ENCODE measurements at regions of chr1 and their contacts with region 1.

Region 1: GRCh38 chr1:92655197-92655801 is 129.6 kb downstream of the EVI5 start:
- DNase-seq: no peak
- H3K4me3 ChIP-seq: no peak overlapping the region
- CTCF ChIP-seq: no peak

Region 2: GRCh38 chr1:92709738-92710137 is 54.4 kb after region 1 on chr1:
- in situ Hi-C with region 1: no loop called
- DNase-seq: peak; percentile 41
- H3K4me3 ChIP-seq: no peak overlapping the region
- CTCF ChIP-seq: no peak

Region 3: GRCh38 chr1:92728697-92729096 is 73.4 kb after region 1 on chr1:
- in situ Hi-C with region 1: no loop called
- DNase-seq: no peak
- H3K4me3 ChIP-seq: no peak overlapping the region
- CTCF ChIP-seq: no peak

Region 4: DNA sequence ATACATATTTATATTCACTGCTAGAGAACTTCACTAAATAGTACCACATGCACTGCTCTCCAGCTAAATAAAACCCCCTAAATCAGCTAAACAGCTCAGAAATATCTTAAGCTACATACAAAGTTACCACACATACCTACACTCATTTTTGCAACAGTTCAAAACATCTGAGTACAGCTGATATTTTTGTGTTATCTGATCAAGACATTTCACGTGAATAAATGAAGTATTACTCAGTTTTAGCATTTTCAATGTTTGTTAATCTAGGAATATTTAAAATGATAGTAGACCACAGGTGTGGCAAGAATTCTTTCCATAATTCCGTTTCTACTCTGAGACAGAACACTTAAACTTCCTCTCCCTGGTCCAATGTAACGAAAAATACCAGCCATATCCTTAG is 108.8 kb after region 1 on chr1:
- in situ Hi-C with region 1: loop called (anchors 5 kb)
- DNase-seq: no peak
- H3K4me3 ChIP-seq: no peak overlapping the region
- CTCF ChIP-seq: no peak